GM10248 (cell line): ENCODE measurements at regions of chr4 and their contacts with region 1.

Region 1: GRCh38 chr4:105103113-105103512 is 43.6 kb upstream of the TET2 start:
- DNase-seq: no peak
- CTCF ChIP-seq: no peak

Region 2: GRCh38 chr4:105116616-105117311 is 13.7 kb after region 1 on chr4:
- CTCF ChIA-PET with region 1: interaction called, 13 read pairs
- POLR2A ChIA-PET with region 1: no interaction called
- DNase-seq: no peak
- CTCF ChIP-seq: no peak

Region 3: GRCh38 chr4:105343146-105343931 is 240.2 kb after region 1 on chr4:
- CTCF ChIA-PET with region 1: no interaction called
- POLR2A ChIA-PET with region 1: no interaction called
- DNase-seq: no peak
- CTCF ChIP-seq: no peak